Vagina (tissue), 2 donors: ENCODE measurements at regions of chr1 and their contacts with region 1.

Region 1: GRCh38 chr1:229661022-229661877 is 35.2 kb downstream of the URB2 start:
- DNase-seq: peak in 1 of 2 donors; percentile 87
- H3K4me3 ChIP-seq: no peak overlapping the region
- H3K27ac ChIP-seq: no peak overlapping the region
- H3K4me1 ChIP-seq: peaks cover 5% of the 10 kb centered on the region
- H3K27me3 ChIP-seq: no peaks in the 10 kb centered on the region
- CTCF ChIP-seq: peak; percentile 73 to 88 (median 75)
- POLR2A ChIP-seq: no peak

Region 2: GRCh38 chr1:230066466-230067404 is 405.5 kb after region 1 on chr1 and contains the start of gene GALNT2:
- intact Hi-C with region 1: loop called (anchors 10 kb)
- DNase-seq: peak; percentile 70 to 87
- H3K4me3 ChIP-seq: peak within 1 kb of the TSS; percentile 86 to 91
- H3K27ac ChIP-seq: peak within 1 kb of the TSS; percentile 92
- H3K4me1 ChIP-seq: peaks cover 43% of the 10 kb centered on the region
- H3K27me3 ChIP-seq: no peaks in the 10 kb centered on the region
- CTCF ChIP-seq: no peak
- POLR2A ChIP-seq: peak in 1 of 2 donors; percentile 88
- total RNA-seq, gene GALNT2: 51.6 TPM

Region 3: DNA sequence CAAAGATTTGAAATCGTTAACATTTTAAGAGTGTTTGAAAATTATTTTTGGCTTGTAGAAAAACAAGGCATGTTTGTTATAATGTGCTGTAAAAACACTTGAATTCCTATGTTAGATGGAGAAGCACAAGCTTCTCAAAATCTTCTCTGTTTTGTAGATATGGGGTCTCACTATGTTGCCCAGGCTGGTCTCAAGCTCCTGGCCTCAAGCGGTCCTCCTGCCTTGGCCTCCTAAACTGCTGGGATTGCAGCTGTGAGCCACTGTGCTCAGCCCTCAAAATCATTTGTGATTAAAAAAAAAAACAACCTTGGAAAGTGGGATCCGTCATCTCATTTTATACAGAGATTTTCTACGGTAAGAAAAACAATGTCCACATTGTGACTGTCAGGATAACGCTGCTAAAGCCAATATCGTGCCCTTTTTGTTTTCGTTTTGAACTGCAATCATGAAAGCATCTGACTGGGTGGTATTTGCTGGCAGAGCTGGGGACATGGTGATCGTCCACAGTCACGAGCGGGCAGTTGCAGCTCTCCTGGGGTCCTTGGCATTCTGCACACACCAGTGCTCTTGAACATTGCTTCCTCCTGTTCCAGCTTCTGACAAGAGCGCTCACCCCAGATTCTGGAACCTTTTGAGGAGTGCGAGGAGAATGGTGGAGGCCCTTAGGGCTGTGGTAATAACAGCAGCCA is 652.3 kb after region 1 on chr1:
- intact Hi-C with region 1: loop called (anchors 2 kb)
- DNase-seq: no peak
- H3K4me3 ChIP-seq: no peak overlapping the region
- H3K27ac ChIP-seq: no peak overlapping the region
- H3K4me1 ChIP-seq: no peaks in the 10 kb centered on the region
- H3K27me3 ChIP-seq: no peaks in the 10 kb centered on the region
- CTCF ChIP-seq: no peak
- POLR2A ChIP-seq: no peak